Breast epithelium (tissue), 4 donors: ENCODE measurements at regions of chr12 and their contacts with region 1.

Region 1: DNA sequence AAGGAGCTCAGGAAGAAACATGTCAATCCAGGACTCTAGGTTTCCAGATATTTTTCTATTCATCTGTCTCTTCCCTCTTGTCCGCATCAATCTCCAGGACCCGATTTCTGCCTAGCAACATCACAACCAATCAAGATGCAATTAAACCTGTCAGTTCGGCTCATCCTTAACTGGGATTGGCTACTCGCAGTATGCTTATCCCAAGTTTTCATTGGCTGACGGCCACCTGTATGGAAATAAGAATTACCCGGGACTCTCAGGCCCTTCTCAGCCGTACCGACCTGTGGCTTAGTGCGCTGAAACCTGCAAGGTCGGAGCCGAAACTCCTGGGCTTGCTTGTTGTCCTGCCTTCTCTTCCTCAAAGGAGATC is 20.4 kb upstream of the ATP5MC2 start:
- DNase-seq: peak; percentile 53 to 69
- H3K4me3 ChIP-seq: peak overlapping the region in 2 of 3 donors; percentile 8 to 26
- H3K27ac ChIP-seq: no peak overlapping the region
- H3K4me1 ChIP-seq: no peaks in the 10 kb centered on the region
- H3K27me3 ChIP-seq: peaks cover 4 to 46% of the 10 kb centered on the region in 2 donors
- CTCF ChIP-seq: no peak
- POLR2A ChIP-seq: no peak

Region 2: GRCh38 chr12:53321074-53321814 is 375.0 kb before region 1 on chr12 and contains the start of gene AAAS:
- intact Hi-C with region 1: no loop called
- DNase-seq: peak; percentile 93 to 96
- H3K4me3 ChIP-seq: peak within 1 kb of the TSS; percentile 55 to 87 (median 61)
- H3K27ac ChIP-seq: peak within 1 kb of the TSS; percentile 86 to 90
- H3K4me1 ChIP-seq: peaks cover 0 to 10% of the 10 kb centered on the region in 2 donors
- H3K27me3 ChIP-seq: no peaks in the 10 kb centered on the region
- CTCF ChIP-seq: peak; percentile 97 to 99 (median 99)
- POLR2A ChIP-seq: peak; percentile 17
- total RNA-seq, gene AAAS: 46.2 to 63.7 (median 51.0) TPM

Region 3: DNA sequence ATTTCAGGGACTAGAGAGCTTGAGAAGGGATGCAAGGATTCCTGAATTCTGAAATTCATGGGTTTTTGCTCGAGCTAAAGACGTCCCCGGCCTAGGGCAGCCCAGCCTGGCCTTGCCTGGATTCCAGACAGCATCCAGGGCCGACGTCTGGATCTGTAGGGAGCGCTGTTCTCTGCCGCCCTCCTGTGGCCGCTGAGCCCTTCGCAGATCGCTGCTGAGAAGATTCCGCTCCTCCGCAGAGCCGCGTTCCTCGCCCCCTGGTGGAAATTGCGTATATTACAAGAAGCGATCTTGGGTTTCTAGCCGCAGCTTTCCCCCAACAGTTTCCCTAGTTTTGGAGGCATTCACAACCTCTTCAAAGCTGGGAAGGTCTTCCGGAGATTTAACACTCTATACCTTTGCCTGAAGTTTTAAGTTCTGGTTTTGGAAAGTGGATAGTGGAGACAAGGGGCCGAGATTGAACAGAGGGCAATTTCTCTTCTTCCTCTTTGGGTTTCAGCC is 50.4 kb after region 1 on chr12:
- intact Hi-C with region 1: loop called (anchors 5 kb)
- DNase-seq: peak; percentile 86 to 93
- H3K4me3 ChIP-seq: no peak overlapping the region
- H3K27ac ChIP-seq: no peak overlapping the region
- H3K4me1 ChIP-seq: peaks cover 0 to 4% of the 10 kb centered on the region in 2 donors
- H3K27me3 ChIP-seq: peaks cover 0 to 24% of the 10 kb centered on the region in 2 donors
- CTCF ChIP-seq: peak; percentile 100
- POLR2A ChIP-seq: no peak

Region 4: DNA sequence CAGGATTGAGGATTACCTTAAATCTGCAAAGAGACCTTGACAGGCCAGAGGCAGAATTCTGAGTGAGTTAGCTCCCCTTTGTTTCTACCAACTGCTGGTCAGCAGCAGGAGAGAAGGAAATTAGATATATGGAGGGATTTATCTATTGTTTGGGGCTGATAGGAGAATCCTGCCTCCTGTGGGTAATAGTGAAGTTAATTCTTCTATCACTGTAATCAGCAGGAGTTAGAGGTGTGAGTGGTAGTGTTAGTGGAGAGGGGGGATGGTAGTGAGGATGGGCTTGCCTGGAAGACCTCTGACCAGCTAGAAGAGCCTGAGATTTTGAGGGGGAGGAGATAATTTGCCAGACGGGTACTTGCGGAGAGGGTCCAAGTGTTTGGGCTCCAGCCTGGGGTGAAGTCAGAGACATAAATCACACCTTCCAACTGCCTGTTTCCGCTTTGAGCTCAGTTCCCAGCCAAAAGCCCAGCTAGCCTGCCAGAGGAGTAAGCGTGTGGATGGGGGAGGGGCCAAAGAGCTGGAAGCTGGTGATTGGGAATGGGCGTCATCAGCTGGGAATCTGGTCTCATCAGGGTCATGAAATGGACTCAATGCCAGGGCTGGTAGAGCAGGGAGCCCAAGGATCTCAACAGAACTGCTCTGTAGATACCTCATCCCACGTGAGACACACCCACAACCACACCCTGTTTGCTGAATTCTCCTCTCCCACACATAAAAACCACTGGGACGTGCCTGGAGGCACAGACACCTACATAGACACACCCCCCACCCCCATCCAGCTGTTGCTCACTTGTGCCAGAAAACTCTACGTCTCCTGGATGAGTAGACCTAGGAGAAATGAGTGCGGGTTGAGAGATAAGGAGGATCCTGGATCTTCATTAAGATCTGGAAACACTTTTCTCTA is 735.9 kb after region 1 on chr12:
- intact Hi-C with region 1: no loop called
- DNase-seq: peak in 1 of 2 donors; percentile 51
- H3K4me3 ChIP-seq: peak overlapping the region in 1 of 3 donors; percentile 13
- H3K27ac ChIP-seq: peak overlapping the region; percentile 38 to 67
- H3K4me1 ChIP-seq: peaks cover 4 to 8% of the 10 kb centered on the region in 2 donors
- H3K27me3 ChIP-seq: no peaks in the 10 kb centered on the region
- CTCF ChIP-seq: no peak
- POLR2A ChIP-seq: no peak